HEK293 (cell line): ENCODE measurements at regions of chr4 and their contacts with region 1.

Region 1: DNA sequence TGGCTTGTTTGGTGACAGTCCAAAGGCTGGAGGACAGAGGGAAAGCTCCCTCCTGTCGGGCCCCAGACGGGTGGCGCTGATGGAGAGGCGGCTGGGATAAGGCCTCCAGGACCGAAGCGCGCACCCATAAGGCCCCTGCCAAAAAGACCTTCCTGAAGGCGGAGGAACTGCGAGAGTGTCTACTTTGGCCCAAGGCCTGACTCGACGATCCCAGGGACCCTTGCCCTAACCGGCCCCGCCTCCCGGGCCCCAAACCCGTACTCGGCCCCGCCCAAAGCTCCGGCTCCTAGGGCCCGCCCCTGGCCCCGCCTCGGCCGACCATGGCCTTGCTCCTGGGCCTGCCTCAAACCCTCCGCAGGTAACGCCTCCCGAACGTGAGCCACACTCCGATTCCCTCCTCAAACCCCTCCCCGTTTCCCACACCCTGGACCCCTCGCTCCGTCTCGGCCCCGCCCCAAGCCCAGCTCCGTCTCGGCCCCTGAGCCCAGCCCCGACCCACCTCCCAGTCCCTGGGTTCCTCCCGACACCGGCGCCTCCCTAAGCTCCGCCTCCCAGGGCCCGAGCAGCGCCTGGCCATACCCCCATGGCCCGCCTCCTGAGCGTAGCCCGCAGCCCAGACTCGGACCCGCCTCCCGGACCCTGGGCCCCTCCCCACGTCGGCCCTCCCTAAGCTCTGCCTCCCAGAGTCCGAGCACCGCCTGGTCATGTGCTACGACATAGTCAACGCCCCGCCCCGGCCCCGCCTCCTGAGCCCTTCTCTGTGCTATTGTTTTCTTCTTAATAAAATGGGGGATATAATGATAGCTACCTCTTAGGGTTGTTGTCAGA is 90.0 kb upstream of the DRD5 start:
- H3K4me3 ChIP-seq: peak overlapping the region; percentile 41
- H3K27ac ChIP-seq: peak overlapping the region; percentile 53; the same call in 1 of the 2 replicates
- H3K4me1 ChIP-seq: no peaks in the 10 kb centered on the region
- CTCF ChIP-seq: no peak

Region 2: GRCh38 chr4:9704551-9705332 is 13.3 kb after region 1 on chr4:
- CTCF ChIA-PET with region 1: interaction called, 17 read pairs
- POLR2A ChIA-PET with region 1: no interaction called
- H3K4me3 ChIP-seq: no peak overlapping the region
- H3K27ac ChIP-seq: no peak overlapping the region
- H3K4me1 ChIP-seq: no peaks in the 10 kb centered on the region
- CTCF ChIP-seq: no peak